ENCODE measurements at regions of chr1 and their contacts with region 1.

Region 1: GRCh38 chr1:151399890-151400495 is 620 bp downstream of the PSMB4 start:
- DNase-seq: peak; percentile 21 to 61 (median 29)
- H3K4me3 ChIP-seq: peak overlapping the region; percentile 69 to 92 (median 80)
- H3K27ac ChIP-seq: peak overlapping the region; percentile 54 to 93 (median 91)
- H3K4me1 ChIP-seq: peaks cover 10 to 15% of the 10 kb centered on the region in 2 donors
- H3K27me3 ChIP-seq: no peaks in the 10 kb centered on the region
- CTCF ChIP-seq: no peak
- POLR2A ChIP-seq: no peak

Region 2: DNA sequence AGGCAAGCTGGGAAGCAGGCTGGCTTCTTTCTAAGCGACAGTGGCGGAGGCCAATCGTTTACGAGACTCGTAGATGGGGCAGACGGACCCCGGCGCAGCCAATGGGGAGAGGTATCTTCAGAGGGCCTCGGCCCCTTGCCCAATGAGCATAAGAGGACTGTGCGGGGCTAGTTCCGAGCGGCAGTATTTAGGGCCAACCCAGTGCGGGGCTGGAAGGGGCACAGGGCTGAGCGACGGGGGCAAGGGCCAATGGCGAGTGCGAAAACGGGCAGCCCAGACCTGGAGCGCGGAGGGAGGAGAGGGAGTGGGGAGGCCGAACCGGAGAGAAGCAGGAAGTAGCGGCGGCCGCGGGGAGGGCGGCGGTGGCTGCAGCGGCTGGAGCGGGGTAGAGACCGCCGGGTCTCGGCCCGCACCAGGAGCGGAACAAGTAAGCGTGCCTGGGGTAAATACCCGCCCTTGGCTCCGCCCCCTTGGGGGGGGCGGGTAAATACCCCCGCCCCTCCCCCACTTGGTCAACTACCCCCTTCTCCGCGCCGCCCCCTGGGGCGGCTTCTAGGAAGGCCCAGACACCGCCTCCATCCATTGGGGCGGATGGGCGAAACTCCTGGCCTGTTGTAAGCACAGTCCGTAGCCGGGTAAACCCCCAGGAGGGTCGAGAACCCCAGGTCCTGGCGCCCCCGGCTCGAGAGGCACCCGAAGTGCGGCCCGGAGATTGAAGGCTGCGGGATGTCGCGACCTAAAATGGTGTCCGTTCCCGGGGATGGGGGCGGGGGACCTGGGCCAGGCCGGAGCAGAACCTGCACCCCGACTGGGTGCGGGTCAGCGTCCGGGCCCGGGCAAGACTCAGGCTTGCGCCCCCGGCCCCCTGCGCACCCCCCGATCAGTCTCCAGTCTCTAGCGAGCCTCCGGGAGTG is 117.8 kb before region 1 on chr1 and contains the start of gene ZNF687:
- intact Hi-C with region 1: loop called in 1 of 2 experiments (anchors 10 kb)
- DNase-seq: peak; percentile 100
- H3K4me3 ChIP-seq: peak within 1 kb of the TSS; percentile 67 to 95 (median 86)
- H3K27ac ChIP-seq: peak within 1 kb of the TSS; percentile 95 to 100 (median 98)
- H3K4me1 ChIP-seq: peaks cover 10 to 21% of the 10 kb centered on the region in 2 donors
- H3K27me3 ChIP-seq: no peaks in the 10 kb centered on the region
- CTCF ChIP-seq: no peak
- POLR2A ChIP-seq: peak; percentile 70 to 86
- total RNA-seq, gene ZNF687: 11.1 to 38.3 (median 32.4) TPM

Region 3: GRCh38 chr1:151309811-151310323 is 90.1 kb before region 1 on chr1:
- intact Hi-C with region 1: loop called in 1 of 2 experiments (anchors 10 kb)
- DNase-seq: peak in 1 of 7 donors; percentile 37
- H3K4me3 ChIP-seq: no peak overlapping the region
- H3K27ac ChIP-seq: peak overlapping the region in 2 of 5 donors; percentile 90 to 93
- H3K4me1 ChIP-seq: peaks cover 39 to 61% of the 10 kb centered on the region in 2 donors
- H3K27me3 ChIP-seq: no peaks in the 10 kb centered on the region
- CTCF ChIP-seq: no peak
- POLR2A ChIP-seq: no peak

Region 4: DNA sequence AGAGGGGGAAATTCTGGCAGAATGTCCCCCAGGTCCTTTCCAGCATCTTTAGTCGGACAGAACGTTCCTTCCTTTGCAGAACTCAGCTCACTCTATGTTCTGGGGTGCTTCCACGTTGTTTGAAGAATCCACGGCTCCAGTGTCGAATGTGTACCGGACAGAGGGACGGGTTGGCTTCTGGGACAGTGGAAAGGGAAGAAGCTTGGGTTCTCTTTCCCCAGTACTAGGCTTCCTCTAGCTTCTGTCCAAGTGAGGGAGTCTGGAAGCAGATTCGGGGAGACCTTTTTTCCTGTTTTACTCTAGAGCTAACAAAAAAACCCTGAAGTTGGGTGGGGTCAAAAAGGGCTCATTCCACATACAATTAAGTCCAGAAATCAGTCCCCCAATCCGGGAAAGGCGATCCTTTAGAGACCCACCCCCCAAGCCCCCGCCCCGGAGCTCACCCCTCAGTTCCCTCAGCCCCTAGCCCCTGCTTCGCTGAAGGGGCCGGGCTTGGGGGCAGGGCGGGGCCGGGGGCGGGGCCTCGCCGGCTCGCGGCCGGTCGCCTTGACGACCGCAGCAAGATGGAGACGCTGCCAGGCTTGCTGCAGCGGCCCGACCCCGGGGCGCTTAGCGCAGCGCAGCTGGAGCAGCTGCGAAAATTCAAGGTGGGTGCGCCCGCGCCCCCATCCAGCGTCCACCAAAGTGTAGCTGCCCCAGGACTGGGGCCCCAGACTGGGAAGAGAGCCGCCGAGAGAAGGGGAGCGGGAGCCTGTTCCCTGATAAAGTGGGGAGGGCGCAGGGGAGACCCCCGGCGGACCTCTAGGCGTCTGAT is 321.2 kb after region 1 on chr1 and contains the start of gene RIIAD1:
- intact Hi-C with region 1: no loop called
- DNase-seq: peak in 1 of 7 donors; percentile 20
- H3K4me3 ChIP-seq: peak within 1 kb of the TSS in 2 of 4 donors; percentile 11 to 68
- H3K27ac ChIP-seq: peak within 1 kb of the TSS in 2 of 5 donors; percentile 32 to 55
- H3K4me1 ChIP-seq: peaks cover 12 to 22% of the 10 kb centered on the region in 2 donors
- H3K27me3 ChIP-seq: no peaks in the 10 kb centered on the region
- CTCF ChIP-seq: no peak
- POLR2A ChIP-seq: no peak
- total RNA-seq, gene RIIAD1: 0.44 to 31.3 (median 5.0) TPM in 5 of 9 donors, not detected in the others